ENCODE measurements at regions of chr2 and their contacts with region 1.

Region 1: DNA sequence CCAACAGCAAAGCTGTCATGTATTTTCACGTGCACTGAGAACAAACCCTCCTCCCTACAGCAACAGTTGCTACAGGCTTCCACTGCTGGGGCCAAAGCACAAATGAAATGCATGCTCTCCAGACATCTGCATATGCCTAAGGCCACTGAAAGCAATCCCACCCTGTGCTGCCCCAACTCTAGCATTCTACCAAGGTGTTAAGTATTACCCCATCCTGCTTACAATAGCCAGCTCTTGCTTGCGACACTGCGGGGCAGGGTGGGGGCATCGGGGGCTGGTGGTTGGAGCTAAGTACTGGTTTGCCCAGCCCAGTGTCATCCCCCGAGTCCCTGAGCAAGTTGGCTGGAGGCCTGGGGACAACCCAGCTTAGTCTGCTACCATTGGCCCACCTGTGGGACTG is 742.5 kb downstream of the TDRD15 start:
- DNase-seq: no peak
- ATAC-seq: no peak
- H3K4me3 ChIP-seq: no peak overlapping the region
- H3K27ac ChIP-seq: no peak overlapping the region
- H3K4me1 ChIP-seq: no peaks in the 10 kb centered on the region
- H3K27me3 ChIP-seq: no peaks in the 10 kb centered on the region
- CTCF ChIP-seq: no peak
- POLR2A ChIP-seq: no peak
- RAD21 ChIP-seq: no peak

Region 2: DNA sequence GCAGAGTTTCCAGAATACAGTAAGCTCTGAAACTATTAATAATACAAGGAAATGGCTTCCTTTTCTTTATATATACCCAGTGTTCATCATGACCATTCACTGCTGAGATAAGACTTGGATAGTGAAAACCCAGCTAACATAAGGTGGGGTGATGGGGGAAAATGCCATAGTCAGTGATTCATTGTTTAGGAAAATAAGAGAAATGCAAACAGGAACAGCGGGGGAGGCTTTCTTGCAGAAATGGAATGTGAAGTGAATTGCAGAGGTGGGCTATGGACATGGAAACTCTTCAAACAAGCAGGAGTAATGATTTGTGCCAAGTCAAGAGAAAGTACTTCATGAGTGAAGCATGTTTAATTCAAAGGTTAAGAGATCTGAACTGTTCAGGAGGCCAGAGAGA is 223.1 kb before region 1 on chr2:
- CTCF ChIA-PET with region 1: no interaction called
- POLR2A ChIA-PET with region 1: no interaction called
- dilution Hi-C with region 1: no loop called
- in situ Hi-C with region 1: no loop called
- intact Hi-C with region 1: no loop called
- DNase-seq: peak; percentile 71
- ATAC-seq: peak; percentile 83
- H3K4me3 ChIP-seq: no peak overlapping the region
- H3K27ac ChIP-seq: no peak overlapping the region; the same call in 1 of the 2 replicates
- H3K4me1 ChIP-seq: peaks cover 10% of the 10 kb centered on the region
- H3K27me3 ChIP-seq: no peaks in the 10 kb centered on the region
- CTCF ChIP-seq: no peak
- POLR2A ChIP-seq: no peak
- RAD21 ChIP-seq: no peak

Region 3: DNA sequence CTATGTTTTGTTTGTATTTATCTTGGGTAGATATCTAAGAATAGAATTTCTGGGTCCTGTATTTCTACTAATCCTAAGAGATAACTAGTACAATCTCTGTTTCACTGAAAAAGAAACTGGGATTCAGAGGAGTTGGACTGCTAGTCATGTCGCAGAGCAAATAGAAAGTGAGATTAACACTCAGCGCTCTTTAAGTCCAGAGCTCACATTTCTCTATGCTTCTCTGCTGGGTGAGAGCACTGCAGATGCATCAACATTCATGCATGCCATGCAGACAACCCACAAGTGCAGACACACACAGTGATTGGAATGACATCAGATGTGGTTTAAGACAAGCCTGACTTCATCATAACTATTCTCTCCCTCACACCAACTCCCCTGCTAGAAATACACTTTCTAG is 178.7 kb before region 1 on chr2:
- CTCF ChIA-PET with region 1: no interaction called
- POLR2A ChIA-PET with region 1: no interaction called
- dilution Hi-C with region 1: no loop called
- in situ Hi-C with region 1: no loop called
- intact Hi-C with region 1: loop called (anchors 1 kb)
- DNase-seq: peak; percentile 29
- ATAC-seq: peak; percentile 48; the same call in 1 of the 2 replicates
- H3K4me3 ChIP-seq: no peak overlapping the region
- H3K27ac ChIP-seq: no peak overlapping the region
- H3K4me1 ChIP-seq: no peaks in the 10 kb centered on the region
- H3K27me3 ChIP-seq: no peaks in the 10 kb centered on the region
- CTCF ChIP-seq: no peak
- POLR2A ChIP-seq: no peak
- RAD21 ChIP-seq: no peak